Posterior vena cava (tissue), 2 donors: ENCODE measurements at regions of chr19 and their contacts with region 1.

Region 1: DNA sequence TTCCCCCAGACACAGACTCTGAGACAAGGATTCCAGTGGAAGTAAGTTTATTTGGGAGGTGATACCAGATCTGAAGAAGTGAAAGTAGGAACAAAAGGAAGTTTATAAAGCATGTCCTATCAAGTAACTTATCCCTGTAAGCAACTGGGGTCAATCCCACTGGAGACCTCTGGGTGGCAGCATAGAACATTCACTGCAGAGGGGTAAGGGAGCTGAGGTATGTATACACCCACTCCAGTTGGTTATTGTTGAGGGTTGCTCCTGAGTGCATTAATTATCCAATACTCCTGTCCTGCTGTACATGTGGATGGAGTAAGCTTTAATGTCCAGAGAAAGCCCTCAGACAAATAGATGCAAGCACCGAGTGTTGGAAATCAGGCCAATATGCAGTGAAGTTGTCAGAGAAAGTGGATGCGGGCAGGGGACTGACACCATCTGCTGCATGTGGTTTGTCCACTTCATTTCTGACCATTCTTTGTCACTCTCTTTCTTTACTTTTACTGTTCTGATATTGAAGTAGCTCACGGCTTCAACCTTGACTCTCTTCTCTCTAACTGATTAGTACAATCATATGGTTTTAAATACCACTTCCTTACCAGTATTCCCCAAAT is 46.7 kb downstream of the NOTCH3 start:
- DNase-seq: no peak

Region 2: DNA sequence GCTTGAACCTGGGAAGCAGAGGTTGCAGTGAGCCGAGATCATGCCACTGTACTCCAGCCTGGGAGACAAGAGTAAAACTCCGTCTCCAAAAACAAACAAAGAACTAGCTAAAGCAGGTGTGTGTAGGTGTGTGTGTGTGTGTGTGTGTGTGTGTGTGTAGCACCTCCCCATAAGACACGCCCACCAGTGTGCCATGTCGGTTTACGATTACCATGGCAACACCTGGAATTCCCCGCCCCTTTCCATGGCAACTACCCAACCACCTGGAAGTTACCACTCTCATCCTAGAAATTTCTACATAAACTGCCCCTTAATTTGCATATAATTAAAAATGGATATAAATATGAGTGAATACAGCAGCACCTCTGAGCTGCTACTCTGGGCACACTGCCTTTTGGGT is 853.8 kb before region 1 on chr19:
- intact Hi-C with region 1: no loop called
- DNase-seq: no peak

Region 3: DNA sequence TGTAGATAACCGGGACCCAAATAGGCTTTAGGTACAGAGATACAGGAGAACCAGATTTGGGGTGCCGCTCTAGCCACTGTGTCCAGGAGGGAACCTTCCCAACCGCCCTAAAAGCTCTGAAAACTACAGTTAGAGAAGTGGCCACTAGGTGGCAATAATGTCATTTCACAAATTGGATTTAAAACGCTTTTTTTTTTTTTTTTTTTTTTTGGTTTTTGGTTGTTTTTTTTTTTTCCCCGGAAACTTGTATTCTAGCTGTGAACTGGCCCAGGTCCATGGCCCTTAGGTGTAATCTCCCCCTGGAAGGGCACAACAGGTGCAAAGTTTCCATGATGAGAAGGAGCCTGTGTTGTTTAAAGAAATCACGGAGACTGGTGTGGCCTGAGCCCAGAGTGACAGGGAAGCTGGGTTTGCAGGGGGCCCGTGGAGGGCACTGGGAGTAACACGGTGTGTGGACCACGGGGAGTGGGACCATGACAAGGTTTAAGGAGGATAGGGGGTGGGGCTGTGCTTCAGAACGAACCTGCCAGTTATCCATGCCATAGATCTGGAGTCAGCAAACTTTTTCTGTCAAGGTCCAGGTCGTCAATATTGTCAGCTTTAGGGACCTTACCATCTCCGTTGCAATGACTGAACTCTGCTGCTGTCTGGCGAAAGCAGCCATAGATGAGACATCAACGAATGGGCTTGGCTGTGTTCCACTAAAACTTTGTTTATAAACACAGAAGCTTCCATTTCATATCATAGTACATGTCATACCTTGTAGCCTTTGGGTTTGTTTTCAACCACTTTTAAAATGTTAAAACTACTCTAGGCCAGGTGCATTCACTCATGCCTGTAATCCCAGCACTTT is 62.0 kb before region 1 on chr19:
- intact Hi-C with region 1: loop called (anchors 1 to 10 kb)
- DNase-seq: peak; percentile 76